ENCODE measurements at regions of chr1 and their contacts with region 1.

Region 1: GRCh38 chr1:81974222-81974841 is 173.6 kb downstream of the ADGRL2 start:
- DNase-seq: no peak
- H3K4me3 ChIP-seq: no peak overlapping the region
- H3K27ac ChIP-seq: no peak overlapping the region
- H3K4me1 ChIP-seq: no peaks in the 10 kb centered on the region
- H3K27me3 ChIP-seq: no peaks in the 10 kb centered on the region
- CTCF ChIP-seq: no peak

Region 2: GRCh38 chr1:82269431-82269830 is 295.1 kb after region 1 on chr1:
- CTCF ChIA-PET with region 1: no interaction called
- dilution Hi-C with region 1: no loop called
- in situ Hi-C with region 1: no loop called
- intact Hi-C with region 1: no loop called
- DNase-seq: peak; percentile 62
- H3K4me3 ChIP-seq: no peak overlapping the region
- H3K27ac ChIP-seq: no peak overlapping the region
- H3K4me1 ChIP-seq: peaks cover 14% of the 10 kb centered on the region
- H3K27me3 ChIP-seq: no peaks in the 10 kb centered on the region
- CTCF ChIP-seq: no peak

Region 3: GRCh38 chr1:82815060-82815459 is 840.7 kb after region 1 on chr1:
- CTCF ChIA-PET with region 1: interaction called, 11 read pairs
- dilution Hi-C with region 1: no loop called
- in situ Hi-C with region 1: no loop called
- intact Hi-C with region 1: no loop called
- DNase-seq: no peak
- H3K4me3 ChIP-seq: no peak overlapping the region
- H3K27ac ChIP-seq: no peak overlapping the region
- H3K4me1 ChIP-seq: no peaks in the 10 kb centered on the region
- H3K27me3 ChIP-seq: no peaks in the 10 kb centered on the region
- CTCF ChIP-seq: no peak

Measured in mammary epithelial cell (primary cell).